ENCODE measurements at regions of chr1 and their contacts with region 1.

Region 1: DNA sequence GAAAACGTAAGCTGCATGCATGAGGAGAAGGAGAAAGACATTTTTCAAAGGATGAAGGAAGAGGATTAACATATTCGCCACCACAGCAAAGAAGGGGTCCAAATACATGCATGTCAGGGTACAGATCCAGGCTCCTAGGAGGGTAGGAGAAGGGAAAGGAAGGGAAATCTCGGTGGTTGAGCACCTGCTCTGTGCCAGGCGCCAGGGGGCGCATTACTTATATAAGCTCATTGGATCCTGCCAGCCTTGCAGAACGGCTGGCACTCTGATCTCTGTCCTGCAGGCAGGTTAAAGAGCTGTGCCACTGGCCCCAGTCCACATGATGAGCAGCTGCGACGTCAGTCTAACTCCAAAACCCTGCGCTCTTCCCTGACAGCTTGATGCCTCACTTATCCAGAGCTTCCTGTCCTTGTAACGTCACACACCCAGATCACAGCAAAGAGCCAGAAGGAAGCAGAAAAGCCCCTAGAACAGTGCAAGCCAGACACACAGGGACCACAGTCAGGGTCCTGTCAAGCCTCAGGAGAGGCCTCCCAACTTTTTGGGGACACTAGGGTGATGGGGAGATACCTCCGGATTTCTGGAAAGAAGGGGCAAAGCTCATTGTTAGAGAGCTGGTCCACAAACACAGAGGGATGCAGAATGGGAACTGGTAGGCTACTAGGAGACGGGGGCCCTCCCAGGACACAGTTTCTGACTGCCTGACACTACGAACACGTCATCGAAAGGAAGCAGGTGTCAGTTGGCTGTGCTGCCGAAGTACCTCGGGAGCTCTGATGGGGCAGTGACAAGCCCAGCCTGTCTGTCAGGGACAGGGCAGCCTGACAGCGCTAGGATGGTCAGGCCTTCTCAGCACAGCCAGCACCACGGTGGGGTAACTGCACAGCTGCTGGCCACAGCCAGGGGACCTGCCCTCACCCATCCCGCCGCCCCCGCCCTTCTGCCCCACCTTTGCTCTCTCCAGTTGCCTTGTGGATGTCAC is 99.1 kb downstream of the BEND5 start:
- DNase-seq: peak; percentile 2
- H3K4me3 ChIP-seq: no peak overlapping the region
- CTCF ChIP-seq: peak; percentile 70

Region 2: GRCh38 chr1:48661726-48662463 is 15.7 kb before region 1 on chr1:
- CTCF ChIA-PET with region 1: interaction called, 18 read pairs
- POLR2A ChIA-PET with region 1: no interaction called
- DNase-seq: no peak
- H3K4me3 ChIP-seq: no peak overlapping the region
- CTCF ChIP-seq: no peak

Region 3: GRCh38 chr1:48697066-48697707 is 19.6 kb after region 1 on chr1:
- CTCF ChIA-PET with region 1: interaction called, 54 read pairs
- POLR2A ChIA-PET with region 1: no interaction called
- DNase-seq: no peak
- H3K4me3 ChIP-seq: no peak overlapping the region
- CTCF ChIP-seq: peak; percentile 85

Region 4: DNA sequence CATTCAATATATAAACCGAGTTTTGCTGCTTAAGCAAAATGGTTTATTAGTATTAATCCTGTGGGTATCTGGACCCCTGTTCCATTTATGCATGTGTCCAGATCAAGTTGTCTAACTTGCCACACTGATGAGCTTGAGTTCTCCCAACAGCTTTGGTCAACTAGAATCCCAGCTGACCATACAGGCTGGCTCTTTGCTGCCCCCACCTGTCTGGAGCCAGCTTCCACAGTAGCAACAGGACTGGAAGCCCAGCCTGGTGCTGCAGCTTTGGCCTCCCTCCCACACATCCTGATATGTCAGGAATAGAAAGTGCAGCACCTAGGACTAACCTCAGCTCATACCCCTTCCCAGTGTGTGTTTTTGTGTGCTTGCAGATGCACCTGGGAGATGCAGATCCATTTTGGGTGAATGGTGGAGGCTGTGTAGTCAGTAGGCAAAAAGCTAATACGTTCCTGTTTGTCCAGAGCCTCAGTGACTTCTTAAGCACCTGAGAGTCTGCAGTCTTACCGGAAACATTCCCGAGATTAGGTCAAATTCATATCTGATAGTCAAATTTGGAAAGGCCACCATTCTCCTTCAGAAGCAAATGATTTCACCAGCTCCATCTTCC is 140.0 kb after region 1 on chr1:
- CTCF ChIA-PET with region 1: interaction called, 47 read pairs
- POLR2A ChIA-PET with region 1: no interaction called
- DNase-seq: no peak
- H3K4me3 ChIP-seq: no peak overlapping the region
- CTCF ChIP-seq: peak; percentile 96

Region 5: DNA sequence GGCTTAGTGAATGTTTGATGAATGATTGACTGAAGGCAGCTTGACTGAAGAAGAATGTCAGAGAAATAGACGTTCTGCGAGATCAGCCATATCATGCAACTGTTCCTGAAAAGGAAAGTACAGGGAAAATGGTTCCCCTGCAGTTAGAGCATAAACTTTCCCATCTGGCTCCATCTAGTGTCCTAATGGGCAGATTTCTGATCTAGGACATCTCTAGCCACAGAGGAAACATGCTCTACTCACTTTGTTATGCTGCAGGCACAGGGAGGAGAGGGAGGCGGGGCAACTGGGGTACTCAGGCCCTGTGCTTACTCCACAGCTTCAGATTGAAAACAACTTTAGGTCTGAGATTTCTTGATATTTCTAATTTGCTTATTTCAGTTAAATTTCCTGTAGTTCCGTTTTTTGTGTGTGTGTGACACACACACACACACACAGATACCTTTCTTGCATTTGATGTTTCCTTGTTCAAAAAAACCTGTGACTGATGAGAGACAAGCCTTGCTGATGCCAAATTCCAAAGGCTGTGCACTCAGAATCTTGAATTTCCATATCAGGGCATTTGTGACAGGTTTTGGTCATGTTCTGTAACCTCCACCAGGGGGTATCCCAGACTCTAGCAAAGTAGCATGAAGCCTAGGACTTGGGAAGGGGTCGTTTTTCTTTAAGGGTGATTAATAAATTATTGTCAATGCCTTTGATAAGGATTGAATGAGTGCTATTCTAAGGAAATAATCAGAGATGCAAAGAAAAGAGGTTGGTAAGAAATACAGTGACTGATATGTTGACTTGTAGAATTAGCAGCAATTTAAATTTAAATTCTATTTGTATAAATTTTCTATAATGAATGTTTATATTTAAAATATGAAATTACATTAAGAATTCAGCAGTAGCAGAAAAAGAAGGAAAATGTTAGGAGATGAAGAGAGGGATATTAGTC is 238.8 kb after region 1 on chr1:
- CTCF ChIA-PET with region 1: interaction called, 20 read pairs
- POLR2A ChIA-PET with region 1: no interaction called
- DNase-seq: peak; percentile 12
- H3K4me3 ChIP-seq: no peak overlapping the region
- CTCF ChIP-seq: peak; percentile 61